H1 (cell line): ENCODE measurements at regions of chr7 and their contacts with region 1.

Region 1: DNA sequence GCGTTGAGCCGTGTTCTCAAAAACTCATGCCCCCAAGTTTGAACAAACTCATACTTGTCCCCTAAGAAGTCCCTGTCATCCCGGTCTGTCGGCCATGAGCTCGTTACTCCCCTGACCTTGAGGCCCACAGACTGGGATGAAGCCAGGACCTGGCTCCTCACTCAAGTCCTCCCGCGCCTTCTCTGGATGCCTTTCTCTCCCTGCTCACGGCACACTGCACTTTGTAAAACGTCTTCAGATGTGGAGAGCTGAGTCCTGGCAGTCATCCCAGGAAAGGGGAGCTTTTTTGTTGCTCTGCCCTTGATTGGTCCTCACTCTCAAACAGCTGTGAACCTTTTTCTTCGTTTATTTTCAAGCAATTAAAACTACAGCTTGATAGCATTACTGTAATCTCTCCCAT is 110.8 kb downstream of the JAZF1 start:
- DNase-seq: no peak
- H3K4me3 ChIP-seq: no peak overlapping the region
- H3K27ac ChIP-seq: no peak overlapping the region
- H3K4me1 ChIP-seq: peaks cover 0 to 3% (median 0%) of the 10 kb centered on the region in 4 experiments; a peak in 3 of 7 replicates
- H3K27me3 ChIP-seq: no peaks in the 10 kb centered on the region
- CTCF ChIP-seq: no peak
- EP300 ChIP-seq: no peak
- POLR2A ChIP-seq: no peak
- RAD21 ChIP-seq: no peak

Region 2: GRCh38 chr7:27952456-27953285 is 117.1 kb before region 1 on chr7:
- CTCF ChIA-PET with region 1: no interaction called
- POLR2A ChIA-PET with region 1: no interaction called
- DNase-seq: no peak
- H3K4me3 ChIP-seq: no peak overlapping the region
- H3K27ac ChIP-seq: no peak overlapping the region
- H3K4me1 ChIP-seq: no peaks in the 10 kb centered on the region
- H3K27me3 ChIP-seq: no peaks in the 10 kb centered on the region
- CTCF ChIP-seq: no peak
- EP300 ChIP-seq: no peak
- POLR2A ChIP-seq: no peak
- RAD21 ChIP-seq: no peak

Region 3: GRCh38 chr7:27992755-27993493 is 76.9 kb before region 1 on chr7:
- CTCF ChIA-PET with region 1: no interaction called
- POLR2A ChIA-PET with region 1: no interaction called
- DNase-seq: no peak
- H3K4me3 ChIP-seq: no peak overlapping the region
- H3K27ac ChIP-seq: no peak overlapping the region
- H3K4me1 ChIP-seq: no peaks in the 10 kb centered on the region; a peak in 1 of 7 replicates
- H3K27me3 ChIP-seq: no peaks in the 10 kb centered on the region
- CTCF ChIP-seq: no peak
- EP300 ChIP-seq: no peak
- POLR2A ChIP-seq: no peak
- RAD21 ChIP-seq: no peak

Region 4: DNA sequence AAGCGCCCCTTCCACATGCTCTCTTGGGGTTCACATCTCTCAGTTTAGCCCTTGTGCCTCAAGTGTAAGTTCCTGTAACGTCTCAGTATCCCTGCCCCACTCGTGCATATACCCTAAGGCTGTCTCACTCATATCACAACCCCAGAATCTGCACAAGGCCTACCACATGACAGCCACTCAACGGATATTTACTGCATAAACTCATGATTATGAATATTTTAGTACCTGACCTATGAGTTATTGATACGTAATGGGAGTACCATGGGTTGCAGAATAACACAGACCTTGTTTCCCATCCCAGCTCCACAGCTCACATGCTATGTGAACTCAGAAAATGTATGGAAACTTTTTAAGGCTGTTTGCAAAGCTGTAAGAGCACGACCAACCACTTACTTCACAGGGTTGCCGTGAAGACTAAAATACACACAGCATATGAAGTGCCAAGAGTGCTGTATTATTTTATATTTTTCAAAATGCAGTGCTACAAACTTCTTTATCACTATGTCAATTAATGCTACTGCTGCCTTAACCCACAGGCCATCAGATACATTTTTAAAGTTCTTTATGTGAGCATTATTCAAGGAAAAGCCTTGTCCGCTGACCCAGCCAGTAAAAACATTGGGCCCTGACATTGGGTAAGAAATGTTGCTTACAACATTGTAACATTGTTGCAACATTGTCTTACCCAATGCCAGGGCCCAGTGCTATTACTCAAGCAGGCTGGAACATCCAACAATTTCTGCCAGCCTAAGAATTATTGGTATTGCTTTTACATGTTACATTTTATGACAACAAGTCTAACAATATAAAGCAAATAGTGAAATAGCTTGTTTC is 13.6 kb after region 1 on chr7:
- CTCF ChIA-PET with region 1: interaction called, 43 read pairs
- POLR2A ChIA-PET with region 1: interaction called, 4 read pairs
- DNase-seq: no peak
- H3K4me3 ChIP-seq: no peak overlapping the region
- H3K27ac ChIP-seq: no peak overlapping the region
- H3K4me1 ChIP-seq: peaks cover 0 to 6% (median 0%) of the 10 kb centered on the region in 4 experiments; a peak in 2 of 7 replicates
- H3K27me3 ChIP-seq: no peaks in the 10 kb centered on the region
- CTCF ChIP-seq: no peak
- EP300 ChIP-seq: no peak
- POLR2A ChIP-seq: no peak
- RAD21 ChIP-seq: no peak

Region 5: GRCh38 chr7:28130277-28130676 is 60.5 kb after region 1 on chr7:
- CTCF ChIA-PET with region 1: no interaction called
- POLR2A ChIA-PET with region 1: no interaction called
- DNase-seq: no peak
- H3K4me3 ChIP-seq: no peak overlapping the region
- H3K27ac ChIP-seq: no peak overlapping the region
- H3K4me1 ChIP-seq: peaks cover 4 to 11% (median 8%) of the 10 kb centered on the region in 4 experiments
- H3K27me3 ChIP-seq: peaks cover 0 to 5% (median 0%) of the 10 kb centered on the region in 4 experiments; a peak in 1 of 7 replicates
- CTCF ChIP-seq: no peak
- EP300 ChIP-seq: no peak
- POLR2A ChIP-seq: no peak
- RAD21 ChIP-seq: no peak